AG04449 (cell line): ENCODE measurements at regions of chr13 and their contacts with region 1.

Region 1: DNA sequence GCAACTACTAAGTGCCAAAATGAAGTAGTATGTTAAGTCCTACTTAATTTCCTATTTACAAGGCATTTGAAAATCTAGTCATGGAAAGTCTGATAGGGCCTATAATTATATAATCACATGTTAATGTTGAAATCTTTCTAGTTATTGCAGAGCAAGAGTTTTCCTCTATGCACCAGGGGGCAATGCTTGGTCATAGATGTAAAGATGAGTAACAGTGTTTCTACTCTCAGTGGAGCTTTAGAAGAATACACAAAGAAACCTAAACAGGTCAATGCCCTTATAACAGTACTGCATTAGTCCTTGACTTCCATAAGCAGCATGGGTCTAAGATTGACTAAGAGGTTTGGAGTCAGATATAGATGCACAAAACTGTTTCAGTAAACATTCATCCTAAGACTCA is 218.7 kb downstream of the KCTD12 start:
- DNase-seq: peak; percentile 9
- H3K4me3 ChIP-seq: no peak overlapping the region
- CTCF ChIP-seq: peak; percentile 26

Region 2: GRCh38 chr13:76886292-76887075 is 218.9 kb after region 1 on chr13 and contains the start of gene KCTD12:
- CTCF ChIA-PET with region 1: interaction called, 41 read pairs
- POLR2A ChIA-PET with region 1: no interaction called
- DNase-seq: no peak
- H3K4me3 ChIP-seq: peak within 1 kb of the TSS; percentile 58
- CTCF ChIP-seq: peak; percentile 31

Region 3: GRCh38 chr13:76903544-76904162 is 236.1 kb after region 1 on chr13:
- CTCF ChIA-PET with region 1: interaction called, 73 read pairs
- POLR2A ChIA-PET with region 1: interaction called, 3 read pairs
- DNase-seq: peak; percentile 41
- H3K4me3 ChIP-seq: no peak overlapping the region
- CTCF ChIP-seq: peak; percentile 96